Heart right ventricle (tissue), 16 donors: ENCODE measurements at regions of chr18 and their contacts with region 1.

Region 1: DNA sequence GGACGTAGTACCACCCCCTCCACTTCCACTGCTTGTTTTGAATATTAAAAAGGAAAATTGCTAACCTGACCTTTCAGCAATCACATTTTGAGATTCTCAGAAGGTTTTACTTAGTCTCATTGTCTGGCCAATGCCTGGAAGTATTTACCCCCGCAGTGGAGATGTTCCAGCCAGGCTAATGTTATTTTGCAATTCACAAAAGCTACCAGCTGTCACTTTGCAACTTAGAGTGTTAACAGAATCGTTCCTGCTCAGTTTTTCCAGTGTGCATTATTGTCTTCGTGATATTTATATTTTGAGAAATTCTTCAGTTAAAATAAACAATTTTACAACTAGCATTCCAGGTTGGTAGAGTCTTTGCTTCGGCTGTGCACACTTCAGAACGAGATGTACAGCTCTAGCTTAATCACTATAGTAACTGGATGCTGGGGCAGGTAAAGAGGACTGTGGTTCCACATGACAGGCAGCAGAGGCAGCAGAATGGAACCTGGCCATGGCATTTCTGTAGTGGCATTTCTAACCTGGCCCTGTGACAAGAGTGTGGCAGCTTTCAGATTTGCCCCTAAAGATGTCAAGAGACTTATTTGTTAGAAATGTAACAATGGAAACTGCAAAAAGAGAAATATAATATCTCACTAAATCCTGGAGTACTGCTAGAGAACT is 85.1 kb downstream of the DTNA start:
- DNase-seq: peak; percentile 9 to 35
- ATAC-seq: peak; percentile 42 to 87 (median 78)
- H3K4me3 ChIP-seq: no peak overlapping the region
- H3K27ac ChIP-seq: peak overlapping the region in 6 of 10 donors; percentile 6 to 52 (median 17)
- H3K4me1 ChIP-seq: peaks cover 0 to 25% (median 14%) of the 10 kb centered on the region in 9 donors
- H3K27me3 ChIP-seq: no peaks in the 10 kb centered on the region
- CTCF ChIP-seq: peak in 2 of 9 donors; percentile 6 to 11

Region 2: DNA sequence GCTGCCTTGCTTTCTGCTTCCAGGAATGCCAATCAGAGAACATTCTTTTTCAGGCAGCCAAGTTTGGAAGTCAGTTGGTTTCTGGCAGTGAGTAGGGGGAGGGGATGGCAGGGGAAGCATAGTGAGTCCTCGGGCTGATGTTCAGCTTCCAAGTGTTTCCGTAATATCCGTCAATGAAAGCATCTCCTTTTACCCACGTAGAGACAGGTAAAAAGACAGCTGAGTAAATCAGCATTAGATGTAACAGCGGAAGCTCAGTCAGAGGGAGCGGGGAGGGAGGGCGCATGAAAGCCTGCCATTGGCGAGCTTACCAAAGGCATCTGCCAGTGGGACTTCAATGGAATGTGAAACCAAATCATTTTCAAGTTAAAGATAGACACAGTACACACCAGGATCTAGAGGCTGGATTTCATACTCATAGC is 202.2 kb before region 1 on chr18:
- intact Hi-C with region 1: loop called in 2 of 10 experiments (anchors 5 to 10 kb)
- DNase-seq: peak; percentile 48 to 58
- ATAC-seq: peak; percentile 80 to 94 (median 92)
- H3K4me3 ChIP-seq: peak overlapping the region in 9 of 10 donors; percentile 29 to 54 (median 48)
- H3K27ac ChIP-seq: peak overlapping the region; percentile 11 to 87 (median 74)
- H3K4me1 ChIP-seq: peaks cover 0 to 42% (median 3%) of the 10 kb centered on the region in 9 donors
- H3K27me3 ChIP-seq: no peaks in the 10 kb centered on the region
- CTCF ChIP-seq: no peak

Region 3: GRCh38 chr18:34840256-34840815 is 45.1 kb after region 1 on chr18:
- intact Hi-C with region 1: no loop called
- DNase-seq: no peak
- ATAC-seq: no peak
- H3K4me3 ChIP-seq: no peak overlapping the region
- H3K27ac ChIP-seq: no peak overlapping the region
- H3K4me1 ChIP-seq: peaks cover 0 to 32% (median 13%) of the 10 kb centered on the region in 9 donors
- H3K27me3 ChIP-seq: no peaks in the 10 kb centered on the region
- CTCF ChIP-seq: no peak